Mucosa of descending colon (tissue), 3 donors: ENCODE measurements at regions of chr2 and their contacts with region 1.

Region 1: GRCh38 chr2:16093639-16094529 is 153.5 kb downstream of the MYCN start:
- DNase-seq: peak in 1 of 3 donors; percentile 59
- ATAC-seq: peak; percentile 78
- H3K4me3 ChIP-seq: no peak overlapping the region
- H3K4me1 ChIP-seq: no peaks in the 10 kb centered on the region
- CTCF ChIP-seq: no peak

Region 2: GRCh38 chr2:16012619-16013358 is 81.1 kb before region 1 on chr2:
- intact Hi-C with region 1: loop called in 1 of 2 experiments (anchors 10 kb)
- DNase-seq: peak; percentile 74 to 82 (median 76)
- ATAC-seq: peak; percentile 92
- H3K4me3 ChIP-seq: no peak overlapping the region
- H3K4me1 ChIP-seq: peaks cover 16% of the 10 kb centered on the region
- CTCF ChIP-seq: no peak

Region 3: DNA sequence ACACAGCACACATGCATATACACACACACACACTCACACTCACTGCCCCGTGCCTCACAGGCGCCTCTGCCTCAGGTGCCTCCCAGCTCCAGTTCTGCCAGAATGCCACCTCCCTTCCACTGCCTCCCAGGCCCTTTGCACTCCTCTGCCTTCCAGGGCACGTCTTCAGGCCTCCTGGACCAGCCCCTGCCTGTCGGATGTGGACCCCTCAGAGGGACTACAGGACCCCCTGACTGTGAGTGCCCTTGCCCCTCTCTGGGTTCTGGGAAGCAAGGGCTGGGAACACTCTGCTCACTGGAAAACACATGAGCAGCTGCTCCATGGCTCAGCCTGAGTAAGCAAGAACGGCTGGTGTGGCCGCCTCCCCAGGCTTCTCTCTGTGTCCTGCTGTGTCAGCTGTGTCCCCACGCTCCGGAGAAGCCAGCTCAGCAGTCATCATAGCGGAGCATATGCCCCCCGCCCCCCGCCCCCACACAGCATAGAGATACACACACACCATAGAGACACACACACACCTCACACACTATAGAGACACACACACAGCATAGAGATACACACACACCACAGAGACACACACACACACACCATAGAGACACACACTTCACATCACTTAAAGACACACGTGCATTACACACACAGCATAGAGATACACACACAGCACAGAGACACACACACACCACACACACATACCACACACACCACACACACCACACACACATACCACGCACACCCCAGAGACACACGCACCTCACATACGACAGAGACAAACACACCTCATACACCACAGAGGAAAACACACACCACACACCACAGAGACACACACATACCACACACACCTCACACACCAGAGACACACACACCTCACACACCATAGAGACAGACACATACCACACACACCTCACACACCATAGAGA is 300.4 kb after region 1 on chr2:
- intact Hi-C with region 1: no loop called
- DNase-seq: no peak
- ATAC-seq: peak; percentile 33
- H3K4me3 ChIP-seq: no peak overlapping the region
- H3K4me1 ChIP-seq: no peaks in the 10 kb centered on the region
- CTCF ChIP-seq: no peak